ENCODE measurements at regions of chr4 and their contacts with region 1.

Region 1: GRCh38 chr4:73069338-73070073 is at the start of gene COX18:
- DNase-seq: peak; percentile 99
- H3K4me3 Mint-ChIP-seq: peak within 1 kb of the TSS; percentile 89
- H3K27ac Mint-ChIP-seq: peak within 1 kb of the TSS; percentile 94
- H3K4me1 Mint-ChIP-seq: peaks cover 33% of the 10 kb centered on the region
- H3K27me3 Mint-ChIP-seq: no peaks in the 10 kb centered on the region
- total RNA-seq, gene COX18: 21.2 and 22.2 TPM in 2 replicates

Region 2: GRCh38 chr4:72767618-72768302 is 301.7 kb before region 1 on chr4:
- intact Hi-C with region 1: no loop called
- DNase-seq: no peak
- H3K4me3 Mint-ChIP-seq: no peak overlapping the region
- H3K27ac Mint-ChIP-seq: no peak overlapping the region
- H3K4me1 Mint-ChIP-seq: no peaks in the 10 kb centered on the region
- H3K27me3 Mint-ChIP-seq: no peaks in the 10 kb centered on the region

Region 3: GRCh38 chr4:72938516-72938915 is 131.0 kb before region 1 on chr4:
- intact Hi-C with region 1: no loop called
- DNase-seq: no peak
- H3K4me3 Mint-ChIP-seq: no peak overlapping the region
- H3K27ac Mint-ChIP-seq: no peak overlapping the region
- H3K4me1 Mint-ChIP-seq: peaks cover 4% of the 10 kb centered on the region
- H3K27me3 Mint-ChIP-seq: no peaks in the 10 kb centered on the region

Region 4: DNA sequence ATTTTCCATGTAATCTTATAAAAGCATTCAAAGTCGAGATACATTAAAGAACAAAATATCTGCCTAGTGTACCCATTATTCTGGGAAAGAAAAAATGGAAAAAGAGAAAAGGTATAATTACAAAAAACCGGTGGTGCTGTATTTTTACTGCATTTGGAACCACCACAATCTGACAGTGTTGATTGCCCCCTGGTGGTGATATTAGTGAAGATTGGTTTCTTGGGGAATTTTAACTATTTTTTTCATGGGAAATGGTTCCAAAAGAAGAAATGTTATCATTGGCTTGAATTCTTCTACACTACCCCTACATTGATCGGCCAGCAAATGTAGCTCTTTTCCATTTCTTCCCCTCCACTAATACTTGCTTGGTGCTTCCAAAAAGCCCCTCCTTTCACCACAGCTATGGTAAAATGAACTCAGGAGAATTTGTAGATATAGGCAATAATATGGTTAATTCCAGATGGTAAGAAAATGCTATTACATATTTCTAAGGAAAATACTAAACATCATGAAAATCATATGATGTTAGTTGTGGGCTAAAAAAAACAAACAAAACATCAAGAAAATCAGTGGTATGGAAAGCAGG is 50.0 kb before region 1 on chr4:
- intact Hi-C with region 1: no loop called
- DNase-seq: peak; percentile 70
- H3K4me3 Mint-ChIP-seq: no peak overlapping the region
- H3K27ac Mint-ChIP-seq: no peak overlapping the region
- H3K4me1 Mint-ChIP-seq: no peaks in the 10 kb centered on the region
- H3K27me3 Mint-ChIP-seq: peaks cover 11% of the 10 kb centered on the region

Region 5: GRCh38 chr4:73034896-73035295 is 34.6 kb before region 1 on chr4:
- intact Hi-C with region 1: no loop called
- DNase-seq: no peak
- H3K4me3 Mint-ChIP-seq: no peak overlapping the region
- H3K27ac Mint-ChIP-seq: no peak overlapping the region
- H3K4me1 Mint-ChIP-seq: peaks cover 8% of the 10 kb centered on the region
- H3K27me3 Mint-ChIP-seq: peaks cover 3% of the 10 kb centered on the region

Region 6: GRCh38 chr4:73055241-73055897 is 14.1 kb before region 1 on chr4:
- intact Hi-C with region 1: loop called (anchors 1 kb)
- DNase-seq: peak; percentile 34
- H3K4me3 Mint-ChIP-seq: no peak overlapping the region
- H3K27ac Mint-ChIP-seq: peak overlapping the region; percentile 49
- H3K4me1 Mint-ChIP-seq: peaks cover 10% of the 10 kb centered on the region
- H3K27me3 Mint-ChIP-seq: no peaks in the 10 kb centered on the region

Region 7: DNA sequence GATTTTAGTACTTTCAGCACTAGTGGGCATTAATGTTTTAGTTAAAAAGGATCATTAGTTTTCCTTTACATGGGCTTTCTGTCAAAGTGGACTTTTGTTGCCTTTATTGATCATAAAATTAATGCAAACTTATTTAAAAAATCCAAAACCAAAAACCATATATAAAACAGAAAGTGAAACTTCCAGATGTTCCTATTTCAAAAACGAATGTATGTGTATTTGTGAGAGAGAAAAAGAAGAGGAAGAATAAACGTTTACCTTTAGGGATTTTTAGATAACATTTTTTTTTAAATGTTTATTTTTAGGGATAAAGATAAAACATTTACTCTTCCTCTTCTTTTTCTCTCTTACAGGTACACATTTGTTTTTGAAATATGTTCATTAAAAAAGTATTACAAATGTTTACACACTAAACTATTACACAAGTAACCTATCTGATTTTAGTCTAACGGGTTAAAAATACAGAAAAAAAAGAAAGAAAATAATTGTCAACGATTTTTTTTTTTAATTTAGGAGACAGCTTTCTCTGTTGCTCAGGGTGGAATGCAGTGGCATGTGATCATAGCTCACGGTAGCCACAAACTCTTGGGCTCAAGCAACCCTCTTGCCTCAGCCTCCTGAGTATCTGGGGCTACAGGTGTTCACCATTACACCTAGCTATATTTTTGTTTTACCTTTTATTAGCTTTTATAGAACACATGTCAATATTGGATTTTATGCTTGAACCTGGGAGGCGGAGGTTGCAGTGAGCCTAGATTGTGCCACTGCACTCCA is 16.8 kb after region 1 on chr4:
- intact Hi-C with region 1: loop called (anchors 2 kb)
- DNase-seq: no peak
- H3K4me3 Mint-ChIP-seq: peak overlapping the region; percentile 69
- H3K27ac Mint-ChIP-seq: no peak overlapping the region
- H3K4me1 Mint-ChIP-seq: peaks cover 8% of the 10 kb centered on the region
- H3K27me3 Mint-ChIP-seq: no peaks in the 10 kb centered on the region

Region 8: DNA sequence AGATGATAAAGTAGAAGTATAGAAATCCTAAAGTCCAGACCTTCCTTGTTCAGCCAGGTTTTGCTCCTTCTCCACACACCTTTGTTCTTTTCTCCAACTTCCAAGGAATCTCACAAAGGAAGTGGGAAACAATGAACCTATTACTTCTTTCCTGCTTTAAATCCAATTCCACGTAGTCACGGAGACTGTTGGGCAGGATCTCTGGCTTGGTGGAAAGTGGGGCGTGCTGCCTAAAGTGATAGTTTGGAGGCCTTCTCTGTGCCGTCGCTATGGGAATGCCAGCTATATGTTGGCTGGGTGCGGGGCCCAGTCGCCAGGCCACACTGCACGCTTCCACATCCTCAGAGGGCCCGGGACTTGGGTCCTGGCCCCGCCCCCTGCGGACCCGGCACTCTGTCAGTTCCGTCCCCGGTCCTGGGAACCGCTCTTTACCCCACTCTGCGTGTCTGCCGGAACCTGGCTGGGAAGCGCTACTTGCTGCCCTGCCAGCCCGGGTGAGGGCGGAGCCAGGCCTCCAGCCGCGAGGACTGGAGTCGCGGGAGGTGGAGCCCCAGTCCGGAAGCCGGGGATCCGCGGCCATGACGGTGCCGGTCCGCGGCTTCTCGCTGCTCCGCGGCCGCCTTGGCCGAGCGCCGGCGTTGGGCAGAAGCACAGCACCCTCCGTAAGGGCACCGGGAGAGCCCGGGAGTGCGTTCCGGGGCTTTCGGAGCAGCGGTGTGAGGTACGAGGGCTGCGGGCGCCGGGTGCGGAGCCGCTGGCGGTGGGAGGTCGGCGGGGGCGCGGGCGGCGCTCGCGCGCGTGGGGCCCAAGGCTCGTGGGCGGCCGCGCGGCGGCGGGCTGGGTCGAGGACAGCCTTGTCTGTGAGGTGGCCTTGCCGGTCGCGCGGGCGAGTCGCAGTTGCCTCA is 1088.3 kb after region 1 on chr4 and contains the start of gene MTHFD2L:
- intact Hi-C with region 1: loop called (anchors 10 kb)
- DNase-seq: peak; percentile 96
- H3K4me3 Mint-ChIP-seq: peak within 1 kb of the TSS; percentile 85
- H3K27ac Mint-ChIP-seq: peak within 1 kb of the TSS; percentile 90
- H3K4me1 Mint-ChIP-seq: peaks cover 16% of the 10 kb centered on the region
- H3K27me3 Mint-ChIP-seq: peaks cover 26% of the 10 kb centered on the region
- total RNA-seq, gene MTHFD2L: 9.4 and 10.0 TPM in 2 replicates

Measured in activated CD4-positive, alpha-beta T cell treated with anti-CD3 and anti-CD28 coated beads, Interleukin-2, amount 10 ng/mL, durations not matched to agents 24 days and 14 days (primary cell).